B cell (primary cell): ENCODE measurements at regions of chr17 and their contacts with region 1.

Region 1: DNA sequence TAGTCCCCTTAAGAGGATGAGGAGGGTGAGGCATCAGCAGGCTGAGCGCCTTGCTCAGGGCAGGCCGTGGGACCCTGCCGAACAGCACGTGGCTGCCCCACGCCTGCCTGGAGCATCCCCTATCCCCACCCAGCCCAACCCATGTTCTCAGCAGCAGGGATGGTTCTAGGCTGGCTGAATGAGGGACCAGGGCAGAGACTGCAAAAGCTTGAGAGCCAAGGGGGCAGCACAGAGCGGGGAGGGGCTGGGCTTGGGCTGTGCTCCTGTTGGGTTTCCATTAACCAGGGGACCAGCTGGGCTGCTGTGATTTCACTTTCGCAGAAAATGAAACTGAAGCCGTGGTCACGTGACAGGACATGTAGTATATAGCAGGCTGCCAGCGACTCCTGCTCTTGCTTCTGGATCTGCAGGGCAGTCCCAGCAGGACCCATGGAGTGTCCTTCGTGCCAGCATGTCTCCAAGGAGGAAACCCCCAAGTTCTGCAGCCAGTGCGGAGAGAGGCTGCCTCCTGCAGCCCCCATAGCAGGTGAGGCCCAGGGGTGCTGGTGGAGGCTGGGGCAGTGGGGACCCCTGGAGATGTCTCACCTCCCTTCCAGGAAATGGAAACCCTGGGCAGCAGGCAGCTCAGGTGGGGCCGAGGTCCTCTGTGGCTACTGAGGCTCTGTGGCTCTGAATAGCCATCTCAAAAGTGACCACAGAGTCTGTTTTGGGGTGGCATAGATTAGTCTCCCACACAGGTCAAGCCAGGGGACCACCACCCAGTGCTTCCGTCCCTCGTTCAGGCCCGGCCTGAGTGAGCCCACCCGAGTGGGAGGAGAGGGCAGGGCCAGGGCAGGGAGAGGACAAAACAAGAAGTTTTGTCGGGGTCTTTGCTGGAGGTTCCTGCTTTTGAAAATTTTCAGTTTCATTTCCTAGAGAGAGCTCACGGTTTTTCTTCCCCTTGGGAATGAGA is 2.9 kb downstream of the RNF213 start:
- DNase-seq: peak; percentile 92
- ATAC-seq: peak; percentile 62
- H3K4me3 ChIP-seq: peak overlapping the region; percentile 46 to 99 (median 86)
- H3K4me3 Mint-ChIP-seq: peak overlapping the region; percentile 97
- H3K27ac ChIP-seq: peak overlapping the region; percentile 86 to 90
- H3K27ac Mint-ChIP-seq: peak overlapping the region; percentile 95
- H3K4me1 ChIP-seq: peaks cover 35 to 57% of the 10 kb centered on the region in 2 donors
- H3K4me1 Mint-ChIP-seq: peaks cover 57% of the 10 kb centered on the region
- H3K27me3 ChIP-seq: no peaks in the 10 kb centered on the region
- H3K27me3 Mint-ChIP-seq: no peaks in the 10 kb centered on the region
- CTCF ChIP-seq: peak; percentile 37

Region 2: DNA sequence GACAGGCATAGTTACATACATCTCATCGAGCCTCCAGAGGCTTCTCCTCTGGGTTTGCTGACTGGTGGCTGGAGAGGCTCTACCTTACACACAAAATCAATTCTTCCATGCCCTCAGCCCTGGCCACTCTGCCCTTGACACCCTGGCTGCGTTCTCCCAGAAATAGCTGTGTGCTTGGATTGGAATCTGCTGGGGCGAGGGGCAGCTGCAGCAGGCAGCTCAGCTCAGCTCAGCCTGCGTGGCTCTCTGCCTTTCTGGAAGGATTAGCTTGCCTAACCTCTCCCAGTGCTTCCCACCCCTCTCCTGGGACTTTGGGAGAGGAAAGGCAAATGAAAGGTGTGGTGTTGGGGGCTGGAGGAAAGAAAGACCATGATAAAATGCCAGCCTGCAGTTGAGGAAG is 972.8 kb before region 1 on chr17:
- CTCF ChIA-PET with region 1: no interaction called
- POLR2A ChIA-PET with region 1: no interaction called
- intact Hi-C with region 1: no loop called
- DNase-seq: no peak
- ATAC-seq: no peak
- H3K4me3 ChIP-seq: no peak overlapping the region
- H3K4me3 Mint-ChIP-seq: no peak overlapping the region
- H3K27ac ChIP-seq: no peak overlapping the region
- H3K27ac Mint-ChIP-seq: no peak overlapping the region
- H3K4me1 ChIP-seq: no peaks in the 10 kb centered on the region
- H3K4me1 Mint-ChIP-seq: no peaks in the 10 kb centered on the region
- H3K27me3 ChIP-seq: peaks cover 0 to 23% (median 3%) of the 10 kb centered on the region in 4 experiments
- H3K27me3 Mint-ChIP-seq: peaks cover 50% of the 10 kb centered on the region
- CTCF ChIP-seq: no peak

Region 3: GRCh38 chr17:80035943-80036714 is 227.4 kb before region 1 on chr17 and contains the start of gene CCDC40:
- CTCF ChIA-PET with region 1: no interaction called
- POLR2A ChIA-PET with region 1: no interaction called
- intact Hi-C with region 1: loop called (anchors 5 kb)
- DNase-seq: peak; percentile 93
- ATAC-seq: peak; percentile 87
- H3K4me3 ChIP-seq: peak within 1 kb of the TSS; percentile 43 to 80 (median 71)
- H3K4me3 Mint-ChIP-seq: peak within 1 kb of the TSS; percentile 87
- H3K27ac ChIP-seq: peak within 1 kb of the TSS; percentile 73 to 83
- H3K27ac Mint-ChIP-seq: peak within 1 kb of the TSS; percentile 89
- H3K4me1 ChIP-seq: peaks cover 15 to 22% of the 10 kb centered on the region in 2 donors
- H3K4me1 Mint-ChIP-seq: peaks cover 11% of the 10 kb centered on the region
- H3K27me3 ChIP-seq: peaks cover 0 to 14% (median 1%) of the 10 kb centered on the region in 4 experiments
- H3K27me3 Mint-ChIP-seq: peaks cover 10% of the 10 kb centered on the region
- CTCF ChIP-seq: no peak
- total RNA-seq, gene CCDC40: 1.9 and 3.2 TPM in 2 replicates

Region 4: DNA sequence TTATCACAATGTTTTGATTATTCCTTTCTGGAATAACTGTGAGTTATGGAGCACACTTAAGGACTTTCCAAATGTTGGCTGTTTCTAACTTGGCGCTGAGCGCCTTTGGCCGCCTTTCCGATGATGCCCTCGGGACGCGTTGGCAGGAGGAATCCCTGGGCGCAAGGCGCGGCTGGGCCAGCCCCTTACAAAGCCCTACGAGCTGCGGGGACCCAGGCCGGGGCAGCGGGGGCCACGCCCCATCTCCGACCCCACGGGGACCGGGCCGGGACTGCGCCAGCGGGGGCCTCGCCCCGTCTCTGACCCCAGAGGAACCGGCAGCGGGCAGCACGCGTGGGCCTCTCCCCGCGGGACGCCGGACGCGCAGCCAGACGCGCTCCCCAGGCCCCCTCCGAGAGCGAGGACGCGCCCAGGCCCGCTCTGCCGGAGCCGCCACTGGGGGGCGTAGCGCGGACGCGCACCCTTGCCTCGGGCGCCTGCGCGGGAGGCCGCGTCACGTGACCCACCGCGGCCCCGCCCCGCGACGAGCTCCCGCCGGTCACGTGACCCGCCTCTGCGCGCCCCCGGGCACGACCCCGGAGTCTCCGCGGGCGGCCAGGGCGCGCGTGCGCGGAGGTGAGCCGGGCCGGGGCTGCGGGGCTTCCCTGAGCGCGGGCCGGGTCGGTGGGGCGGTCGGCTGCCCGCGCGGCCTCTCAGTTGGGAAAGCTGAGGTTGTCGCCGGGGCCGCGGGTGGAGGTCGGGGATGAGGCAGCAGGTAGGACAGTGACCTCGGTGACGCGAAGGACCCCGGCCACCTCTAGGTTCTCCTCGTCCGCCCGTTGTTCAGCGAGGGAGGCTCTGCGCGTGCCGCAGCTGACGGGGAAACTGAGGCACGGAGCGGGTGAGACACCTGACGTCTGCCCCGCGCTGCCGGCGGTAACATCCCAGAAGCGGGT is 162.3 kb before region 1 on chr17 and contains the start of gene GAA:
- CTCF ChIA-PET with region 1: interaction called, 4 read pairs
- POLR2A ChIA-PET with region 1: interaction called, 3 read pairs
- intact Hi-C with region 1: loop called (anchors 2 kb)
- DNase-seq: peak; percentile 93
- ATAC-seq: peak; percentile 89
- H3K4me3 ChIP-seq: peak within 1 kb of the TSS; percentile 64 to 88 (median 84)
- H3K4me3 Mint-ChIP-seq: peak within 1 kb of the TSS; percentile 90
- H3K27ac ChIP-seq: peak within 1 kb of the TSS; percentile 65 to 81
- H3K27ac Mint-ChIP-seq: peak within 1 kb of the TSS; percentile 91
- H3K4me1 ChIP-seq: peaks cover 14 to 22% of the 10 kb centered on the region in 2 donors
- H3K4me1 Mint-ChIP-seq: peaks cover 24% of the 10 kb centered on the region
- H3K27me3 ChIP-seq: peaks cover 0 to 3% (median 0%) of the 10 kb centered on the region in 4 experiments
- H3K27me3 Mint-ChIP-seq: no peaks in the 10 kb centered on the region
- CTCF ChIP-seq: peak; percentile 86
- total RNA-seq, gene GAA: 39.4 and 40.0 TPM in 2 replicates

Region 5: GRCh38 chr17:80147035-80147836 is 116.3 kb before region 1 on chr17 and contains the start of gene EIF4A3:
- CTCF ChIA-PET with region 1: no interaction called
- POLR2A ChIA-PET with region 1: no interaction called
- intact Hi-C with region 1: loop called (anchors 1 kb)
- DNase-seq: peak; percentile 99
- ATAC-seq: peak; percentile 90
- H3K4me3 ChIP-seq: peak within 1 kb of the TSS; percentile 61 to 94 (median 79)
- H3K4me3 Mint-ChIP-seq: peak within 1 kb of the TSS; percentile 95
- H3K27ac ChIP-seq: peak within 1 kb of the TSS; percentile 82 to 87
- H3K27ac Mint-ChIP-seq: peak within 1 kb of the TSS; percentile 97
- H3K4me1 ChIP-seq: peaks cover 25 to 37% of the 10 kb centered on the region in 2 donors
- H3K4me1 Mint-ChIP-seq: peaks cover 36% of the 10 kb centered on the region
- H3K27me3 ChIP-seq: no peaks in the 10 kb centered on the region
- H3K27me3 Mint-ChIP-seq: no peaks in the 10 kb centered on the region
- CTCF ChIP-seq: no peak
- total RNA-seq, gene EIF4A3: 83.4 and 86.0 TPM in 2 replicates

Region 6: GRCh38 chr17:80169784-80170500 is 93.6 kb before region 1 on chr17 and contains the start of gene CARD14:
- CTCF ChIA-PET with region 1: no interaction called
- POLR2A ChIA-PET with region 1: no interaction called
- intact Hi-C with region 1: no loop called
- DNase-seq: no peak
- ATAC-seq: no peak
- H3K4me3 ChIP-seq: no peak within 1 kb of the TSS
- H3K4me3 Mint-ChIP-seq: no peak within 1 kb of the TSS
- H3K27ac ChIP-seq: no peak within 1 kb of the TSS
- H3K27ac Mint-ChIP-seq: no peak within 1 kb of the TSS
- H3K4me1 ChIP-seq: no peaks in the 10 kb centered on the region
- H3K4me1 Mint-ChIP-seq: no peaks in the 10 kb centered on the region
- H3K27me3 ChIP-seq: peaks cover 0 to 9% (median 0%) of the 10 kb centered on the region in 4 experiments
- H3K27me3 Mint-ChIP-seq: peaks cover 9% of the 10 kb centered on the region
- CTCF ChIP-seq: no peak
- total RNA-seq, gene CARD14: not detected in 2 replicates

Region 7: GRCh38 chr17:80364216-80364618 is 100.7 kb after region 1 on chr17:
- CTCF ChIA-PET with region 1: no interaction called
- POLR2A ChIA-PET with region 1: no interaction called
- intact Hi-C with region 1: no loop called
- DNase-seq: peak; percentile 34
- ATAC-seq: no peak
- H3K4me3 ChIP-seq: no peak overlapping the region
- H3K4me3 Mint-ChIP-seq: no peak overlapping the region
- H3K27ac ChIP-seq: no peak overlapping the region
- H3K27ac Mint-ChIP-seq: no peak overlapping the region
- H3K4me1 ChIP-seq: no peaks in the 10 kb centered on the region
- H3K4me1 Mint-ChIP-seq: no peaks in the 10 kb centered on the region
- H3K27me3 ChIP-seq: no peaks in the 10 kb centered on the region
- H3K27me3 Mint-ChIP-seq: no peaks in the 10 kb centered on the region
- CTCF ChIP-seq: no peak